ENCODE measurements at regions of chr7 and their contacts with region 1.

Region 1: GRCh38 chr7:66114793-66115649 is at the start of gene CRCP:
- DNase-seq: peak; percentile 62 to 92 (median 80)
- ATAC-seq: peak; percentile 92
- H3K4me3 ChIP-seq: peak within 1 kb of the TSS; percentile 93
- H3K4me3 Mint-ChIP-seq: peak within 1 kb of the TSS; percentile 96
- H3K27ac ChIP-seq: peak within 1 kb of the TSS; percentile 86 to 95
- H3K27ac Mint-ChIP-seq: peak within 1 kb of the TSS; percentile 88
- H3K4me1 ChIP-seq: peaks cover 47% of the 10 kb centered on the region
- H3K4me1 Mint-ChIP-seq: peaks cover 50% of the 10 kb centered on the region
- H3K27me3 ChIP-seq: no peaks in the 10 kb centered on the region
- H3K27me3 Mint-ChIP-seq: no peaks in the 10 kb centered on the region
- CTCF ChIP-seq: peak; percentile 19
- total RNA-seq, gene CRCP: 29.2 to 29.4 TPM

Region 2: DNA sequence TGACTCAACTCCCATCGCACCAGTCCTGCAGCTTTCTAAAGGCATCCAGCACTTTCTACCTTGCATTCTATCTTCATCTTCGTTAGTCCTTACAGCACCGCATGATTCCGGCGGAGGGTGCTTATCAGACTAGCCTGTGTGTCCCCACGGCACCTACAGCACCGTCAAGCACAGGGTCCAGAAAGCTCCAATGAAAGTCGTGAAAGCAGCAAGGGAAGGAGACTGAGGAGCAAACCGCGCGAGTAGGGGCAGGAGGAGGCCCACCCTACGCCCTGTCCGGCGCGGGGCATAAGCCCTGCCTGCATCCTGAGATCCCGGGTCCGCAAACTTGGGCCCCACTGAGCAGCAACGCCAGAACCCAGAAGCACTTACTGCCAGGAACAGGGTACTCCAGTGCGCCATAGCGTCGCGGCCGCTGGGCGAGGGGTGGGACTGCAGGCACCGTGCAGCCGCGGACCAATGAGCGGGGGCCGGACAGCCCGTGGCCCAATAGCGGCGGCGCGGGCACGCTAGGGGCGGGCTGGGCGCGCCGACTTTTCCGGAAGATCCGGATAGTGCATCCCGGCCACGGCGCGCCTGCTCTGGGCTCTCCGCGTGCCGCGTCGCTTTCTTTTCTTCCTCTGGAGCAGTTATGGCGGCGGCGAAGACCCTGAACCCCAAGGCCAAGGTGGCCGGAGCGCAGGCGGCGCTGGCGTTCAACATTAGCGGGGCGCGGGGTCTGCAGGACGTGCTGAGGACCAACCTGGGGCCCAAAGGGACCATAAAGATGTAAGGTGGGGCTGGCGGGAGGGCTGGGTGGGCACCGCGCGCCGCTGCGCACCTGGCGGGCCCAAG is 364.3 kb before region 1 on chr7:
- CTCF ChIA-PET with region 1: interaction called, 4 read pairs
- POLR2A ChIA-PET with region 1: interaction called, 4 read pairs
- intact Hi-C with region 1: loop called in 1 of 2 experiments (anchors 10 kb)
- DNase-seq: peak; percentile 70 to 92 (median 84)
- ATAC-seq: peak; percentile 96
- H3K4me3 ChIP-seq: peak overlapping the region; percentile 98
- H3K4me3 Mint-ChIP-seq: peak overlapping the region; percentile 99
- H3K27ac ChIP-seq: peak overlapping the region; percentile 56 to 69
- H3K27ac Mint-ChIP-seq: peak overlapping the region; percentile 96
- H3K4me1 ChIP-seq: peaks cover 25% of the 10 kb centered on the region
- H3K4me1 Mint-ChIP-seq: peaks cover 33% of the 10 kb centered on the region
- H3K27me3 ChIP-seq: no peaks in the 10 kb centered on the region
- H3K27me3 Mint-ChIP-seq: no peaks in the 10 kb centered on the region
- CTCF ChIP-seq: no peak

Region 3: GRCh38 chr7:65872776-65873581 is 242.0 kb before region 1 on chr7 and contains the start of gene VKORC1L1:
- CTCF ChIA-PET with region 1: no interaction called
- POLR2A ChIA-PET with region 1: no interaction called
- intact Hi-C with region 1: loop called in 1 of 2 experiments (anchors 10 kb)
- DNase-seq: peak; percentile 89 to 97 (median 96)
- ATAC-seq: peak; percentile 87
- H3K4me3 ChIP-seq: peak within 1 kb of the TSS; percentile 68
- H3K4me3 Mint-ChIP-seq: peak within 1 kb of the TSS; percentile 91
- H3K27ac ChIP-seq: no peak within 1 kb of the TSS
- H3K27ac Mint-ChIP-seq: peak within 1 kb of the TSS; percentile 80
- H3K4me1 ChIP-seq: peaks cover 13% of the 10 kb centered on the region
- H3K4me1 Mint-ChIP-seq: peaks cover 12% of the 10 kb centered on the region
- H3K27me3 ChIP-seq: no peaks in the 10 kb centered on the region
- H3K27me3 Mint-ChIP-seq: no peaks in the 10 kb centered on the region
- CTCF ChIP-seq: no peak
- total RNA-seq, gene VKORC1L1: 1.9 to 3.0 TPM

Region 4: DNA sequence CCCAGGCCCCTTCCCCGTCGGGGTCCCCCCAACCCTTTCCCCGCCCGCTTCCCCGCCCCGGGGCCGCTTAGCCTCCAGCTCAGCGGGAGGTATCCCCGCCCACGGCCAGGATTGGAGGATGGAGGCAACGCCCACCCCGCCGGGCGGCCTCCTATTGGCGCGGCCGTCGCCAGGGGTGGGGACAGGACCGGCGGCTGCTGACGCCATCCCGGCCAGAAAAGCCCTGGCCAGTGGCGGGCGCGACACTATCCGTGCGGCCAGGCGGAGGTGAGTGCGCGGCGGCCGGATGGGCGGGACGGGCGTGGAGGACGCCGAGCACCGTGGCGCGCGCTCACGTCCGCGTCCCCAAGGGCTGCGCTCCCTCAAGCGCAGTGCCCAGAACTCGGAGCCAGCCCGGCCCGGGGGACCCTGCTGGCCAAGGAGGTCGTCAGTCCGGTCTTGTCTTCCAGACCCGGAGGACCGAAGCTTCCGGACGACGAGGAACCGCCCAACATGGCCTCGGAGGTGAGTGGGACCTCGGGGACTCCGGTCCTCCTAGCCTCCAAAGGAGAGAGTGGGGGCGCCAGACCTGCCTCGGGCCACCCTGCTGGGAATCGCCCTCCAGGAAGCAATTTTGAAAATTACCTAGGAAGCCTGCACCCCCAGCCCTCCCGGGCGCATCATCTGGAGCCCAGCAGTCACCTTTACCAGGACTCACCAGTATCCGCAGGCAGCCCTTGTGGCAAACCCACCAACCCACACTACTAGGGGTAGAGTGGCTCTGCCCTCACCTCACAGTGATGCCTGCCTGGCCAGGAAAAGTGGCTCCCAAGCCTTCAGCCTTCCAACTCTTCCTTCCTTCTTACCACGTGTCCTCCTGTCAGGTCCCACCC is 39.2 kb before region 1 on chr7 and contains the start of gene ASL:
- CTCF ChIA-PET with region 1: no interaction called
- POLR2A ChIA-PET with region 1: interaction called, 12 read pairs
- intact Hi-C with region 1: loop called (anchors 1 to 5 kb)
- DNase-seq: peak; percentile 61 to 93 (median 78)
- ATAC-seq: peak; percentile 97
- H3K4me3 ChIP-seq: peak within 1 kb of the TSS; percentile 96
- H3K4me3 Mint-ChIP-seq: peak within 1 kb of the TSS; percentile 94
- H3K27ac ChIP-seq: peak within 1 kb of the TSS in 1 of 2 donors; percentile 13
- H3K27ac Mint-ChIP-seq: peak within 1 kb of the TSS; percentile 69
- H3K4me1 ChIP-seq: peaks cover 19% of the 10 kb centered on the region
- H3K4me1 Mint-ChIP-seq: peaks cover 22% of the 10 kb centered on the region
- H3K27me3 ChIP-seq: no peaks in the 10 kb centered on the region
- H3K27me3 Mint-ChIP-seq: no peaks in the 10 kb centered on the region
- CTCF ChIP-seq: no peak
- total RNA-seq, gene ASL: 11.2 to 12.3 TPM

Region 5: DNA sequence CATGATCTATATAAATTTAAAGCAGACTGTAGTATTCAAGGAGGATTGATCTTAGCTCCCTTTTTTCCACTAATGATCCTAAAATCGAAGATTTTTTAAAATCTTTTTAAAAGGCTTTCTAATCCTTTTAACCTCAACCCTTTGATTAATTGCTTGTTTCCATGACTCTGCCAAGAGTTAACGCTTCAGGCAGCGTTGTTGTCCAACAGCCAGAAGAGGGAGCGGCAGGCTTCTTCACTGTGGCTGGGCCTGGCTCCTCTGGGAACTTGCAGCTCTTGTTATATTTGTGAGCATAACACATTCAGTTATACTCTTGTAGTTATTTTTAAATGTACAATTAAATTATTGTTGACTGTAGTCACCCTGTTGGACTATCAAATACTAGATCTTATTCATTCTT is 25.9 kb after region 1 on chr7:
- CTCF ChIA-PET with region 1: no interaction called
- POLR2A ChIA-PET with region 1: no interaction called
- intact Hi-C with region 1: no loop called
- DNase-seq: no peak
- ATAC-seq: no peak
- H3K4me3 ChIP-seq: no peak overlapping the region
- H3K4me3 Mint-ChIP-seq: no peak overlapping the region
- H3K27ac ChIP-seq: no peak overlapping the region
- H3K27ac Mint-ChIP-seq: no peak overlapping the region
- H3K4me1 ChIP-seq: no peaks in the 10 kb centered on the region
- H3K4me1 Mint-ChIP-seq: no peaks in the 10 kb centered on the region
- H3K27me3 ChIP-seq: no peaks in the 10 kb centered on the region
- H3K27me3 Mint-ChIP-seq: no peaks in the 10 kb centered on the region
- CTCF ChIP-seq: no peak

Region 6: DNA sequence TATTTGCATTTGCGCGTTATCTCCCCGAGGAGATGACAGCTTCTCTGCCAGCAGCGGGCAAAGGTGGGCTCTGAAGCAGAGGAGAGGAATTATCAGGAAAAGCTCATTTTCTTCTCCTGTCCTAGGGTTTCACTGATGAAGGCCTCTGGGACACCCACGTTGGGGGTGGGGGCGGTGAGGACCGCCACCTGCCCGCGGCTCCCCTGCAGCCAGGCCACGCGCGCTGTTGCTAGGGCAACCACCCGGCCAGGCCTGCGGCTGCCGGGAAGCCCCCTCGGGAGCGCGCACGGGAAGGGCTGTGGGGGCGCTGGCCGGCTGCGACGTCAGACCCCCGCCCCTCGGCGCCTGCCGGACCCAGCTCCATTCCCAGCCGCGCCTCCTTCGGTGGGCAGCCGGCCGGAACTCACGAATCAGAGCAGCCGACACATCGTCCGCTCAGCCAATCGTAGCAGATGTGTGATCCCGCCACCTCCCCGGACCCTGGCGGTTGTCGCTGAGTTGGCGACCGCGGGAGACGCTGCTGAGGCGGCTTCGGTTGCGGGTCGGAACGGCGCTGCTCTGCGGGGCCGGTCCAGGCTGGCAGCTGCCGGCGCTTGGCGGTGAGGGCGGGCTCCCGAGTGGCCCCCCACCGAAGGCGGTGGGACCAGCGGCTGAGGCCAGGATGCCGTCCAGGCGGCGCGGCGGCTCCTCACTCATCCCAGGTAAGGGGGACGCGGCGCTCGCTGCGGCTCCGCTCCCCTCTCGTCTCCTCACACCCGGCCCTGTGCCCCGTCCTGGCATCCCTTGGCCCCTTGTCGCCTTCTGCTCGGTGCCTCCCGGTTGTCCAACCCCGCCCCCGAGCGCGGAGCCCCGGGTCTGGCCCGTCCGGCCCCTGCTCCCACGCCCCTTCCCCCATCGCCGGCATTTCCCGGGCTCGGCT is 90.1 kb after region 1 on chr7 and contains the start of gene TPST1:
- CTCF ChIA-PET with region 1: no interaction called
- POLR2A ChIA-PET with region 1: no interaction called
- intact Hi-C with region 1: loop called (anchors 5 to 10 kb)
- DNase-seq: peak; percentile 60 to 88 (median 70)
- ATAC-seq: peak; percentile 94
- H3K4me3 ChIP-seq: peak within 1 kb of the TSS; percentile 56
- H3K4me3 Mint-ChIP-seq: peak within 1 kb of the TSS; percentile 92
- H3K27ac ChIP-seq: no peak within 1 kb of the TSS
- H3K27ac Mint-ChIP-seq: peak within 1 kb of the TSS; percentile 58
- H3K4me1 ChIP-seq: peaks cover 24% of the 10 kb centered on the region
- H3K4me1 Mint-ChIP-seq: peaks cover 39% of the 10 kb centered on the region
- H3K27me3 ChIP-seq: peaks cover 8 to 10% of the 10 kb centered on the region in 2 experiments
- H3K27me3 Mint-ChIP-seq: peaks cover 18% of the 10 kb centered on the region
- CTCF ChIP-seq: peak; percentile 54
- total RNA-seq, gene TPST1: 1.9 to 2.6 TPM

Region 7: GRCh38 chr7:67302113-67303039 is 1187.4 kb after region 1 on chr7:
- CTCF ChIA-PET with region 1: no interaction called
- POLR2A ChIA-PET with region 1: no interaction called
- intact Hi-C with region 1: loop called in 1 of 2 experiments (anchors 10 kb)
- DNase-seq: peak; percentile 90 to 99 (median 96)
- ATAC-seq: peak; percentile 82
- H3K4me3 ChIP-seq: peak overlapping the region; percentile 70
- H3K4me3 Mint-ChIP-seq: peak overlapping the region; percentile 96
- H3K27ac ChIP-seq: peak overlapping the region; percentile 68 to 89
- H3K27ac Mint-ChIP-seq: peak overlapping the region; percentile 99
- H3K4me1 ChIP-seq: peaks cover 24% of the 10 kb centered on the region
- H3K4me1 Mint-ChIP-seq: peaks cover 23% of the 10 kb centered on the region
- H3K27me3 ChIP-seq: no peaks in the 10 kb centered on the region
- H3K27me3 Mint-ChIP-seq: no peaks in the 10 kb centered on the region
- CTCF ChIP-seq: no peak

Measured in CD4-positive, alpha-beta T cell (primary cell).